Activated T-helper 2 cell treated with anti-CD3 and anti-CD28 coated beads, Interferon-gamma antibody, Interleukin-2, Interleukin-4, amounts not matched to agents 10 μg/mL and 5 μg/mL and 100 μg/mL, durations not matched to agents 14 hours and 24 hours and 36 hours (primary cell): ENCODE measurements at regions of chr10 and their contacts with region 1.

Region 1: DNA sequence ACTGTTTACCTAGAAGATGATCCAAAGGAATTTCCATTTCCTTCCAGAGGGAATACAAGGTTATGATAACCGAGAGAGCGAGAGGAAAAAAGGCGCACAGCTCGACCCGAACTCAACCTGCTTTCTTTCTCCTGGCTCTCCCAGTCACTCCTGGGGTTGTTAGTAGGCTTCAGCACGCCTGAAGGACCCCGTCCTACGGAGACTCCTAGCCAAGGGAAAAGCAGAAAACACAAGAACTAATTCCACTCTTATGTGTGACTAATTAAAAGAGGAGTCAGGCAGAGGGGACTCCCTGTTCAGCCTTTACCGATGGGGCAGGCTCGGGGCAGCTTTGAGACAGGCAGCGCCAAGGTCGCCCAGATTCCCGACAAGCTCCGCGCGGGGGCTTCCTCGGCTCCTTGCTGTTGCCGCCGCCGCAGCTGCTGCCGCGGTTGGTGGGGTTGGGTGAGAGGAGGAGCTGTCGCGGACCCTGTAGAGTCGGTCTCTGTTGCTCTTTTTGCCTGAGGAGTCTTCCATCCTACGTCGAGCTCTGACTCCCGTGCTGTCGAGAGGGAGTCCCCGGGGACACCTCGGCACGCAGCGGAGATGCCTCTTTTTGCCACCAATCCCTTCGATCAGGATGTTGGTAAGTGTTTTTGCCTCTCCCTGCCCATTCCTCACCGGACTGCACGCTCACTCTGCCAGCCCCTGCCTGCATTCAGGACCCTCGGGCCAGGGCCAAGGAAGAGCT is at the start of gene STAM:
- DNase-seq: peak; percentile 87
- H3K4me3 Mint-ChIP-seq: peak within 1 kb of the TSS; percentile 98
- H3K27ac Mint-ChIP-seq: peak within 1 kb of the TSS; percentile 99
- H3K4me1 Mint-ChIP-seq: peaks cover 44% of the 10 kb centered on the region
- H3K27me3 Mint-ChIP-seq: no peaks in the 10 kb centered on the region
- total RNA-seq, gene STAM: 33.8 and 35.2 TPM in 2 replicates

Region 2: GRCh38 chr10:16817125-16818019 is 826.5 kb before region 1 on chr10 and contains the start of gene RSU1:
- intact Hi-C with region 1: loop called (anchors 1 kb)
- DNase-seq: peak; percentile 100
- H3K4me3 Mint-ChIP-seq: peak within 1 kb of the TSS; percentile 93
- H3K27ac Mint-ChIP-seq: peak within 1 kb of the TSS; percentile 79
- H3K4me1 Mint-ChIP-seq: peaks cover 27% of the 10 kb centered on the region
- H3K27me3 Mint-ChIP-seq: peaks cover 10% of the 10 kb centered on the region
- total RNA-seq, gene RSU1: 49.1 and 54.0 TPM in 2 replicates

Region 3: DNA sequence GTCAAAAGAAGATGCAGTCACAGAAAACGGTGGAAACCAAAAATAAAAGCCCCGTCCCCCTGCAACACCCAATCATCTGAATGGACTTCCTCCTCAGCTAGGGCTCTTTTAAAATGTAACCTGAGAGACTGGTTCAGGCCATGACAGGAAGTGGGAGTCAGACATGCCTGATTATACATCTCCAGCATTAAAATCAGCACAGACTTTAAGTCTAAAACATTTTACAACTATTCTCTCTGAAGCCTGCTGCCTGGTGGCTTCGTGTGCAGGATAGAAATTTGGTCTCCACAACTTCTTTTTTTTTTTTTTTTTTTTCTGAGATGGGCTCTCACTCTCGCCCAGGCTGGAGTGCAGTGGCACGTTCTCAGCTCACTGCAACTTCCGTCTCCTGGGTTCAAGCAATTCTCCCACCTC is 57.1 kb before region 1 on chr10:
- intact Hi-C with region 1: no loop called
- DNase-seq: no peak
- H3K4me3 Mint-ChIP-seq: no peak overlapping the region
- H3K27ac Mint-ChIP-seq: no peak overlapping the region
- H3K4me1 Mint-ChIP-seq: peaks cover 3% of the 10 kb centered on the region
- H3K27me3 Mint-ChIP-seq: peaks cover 9% of the 10 kb centered on the region

Region 4: DNA sequence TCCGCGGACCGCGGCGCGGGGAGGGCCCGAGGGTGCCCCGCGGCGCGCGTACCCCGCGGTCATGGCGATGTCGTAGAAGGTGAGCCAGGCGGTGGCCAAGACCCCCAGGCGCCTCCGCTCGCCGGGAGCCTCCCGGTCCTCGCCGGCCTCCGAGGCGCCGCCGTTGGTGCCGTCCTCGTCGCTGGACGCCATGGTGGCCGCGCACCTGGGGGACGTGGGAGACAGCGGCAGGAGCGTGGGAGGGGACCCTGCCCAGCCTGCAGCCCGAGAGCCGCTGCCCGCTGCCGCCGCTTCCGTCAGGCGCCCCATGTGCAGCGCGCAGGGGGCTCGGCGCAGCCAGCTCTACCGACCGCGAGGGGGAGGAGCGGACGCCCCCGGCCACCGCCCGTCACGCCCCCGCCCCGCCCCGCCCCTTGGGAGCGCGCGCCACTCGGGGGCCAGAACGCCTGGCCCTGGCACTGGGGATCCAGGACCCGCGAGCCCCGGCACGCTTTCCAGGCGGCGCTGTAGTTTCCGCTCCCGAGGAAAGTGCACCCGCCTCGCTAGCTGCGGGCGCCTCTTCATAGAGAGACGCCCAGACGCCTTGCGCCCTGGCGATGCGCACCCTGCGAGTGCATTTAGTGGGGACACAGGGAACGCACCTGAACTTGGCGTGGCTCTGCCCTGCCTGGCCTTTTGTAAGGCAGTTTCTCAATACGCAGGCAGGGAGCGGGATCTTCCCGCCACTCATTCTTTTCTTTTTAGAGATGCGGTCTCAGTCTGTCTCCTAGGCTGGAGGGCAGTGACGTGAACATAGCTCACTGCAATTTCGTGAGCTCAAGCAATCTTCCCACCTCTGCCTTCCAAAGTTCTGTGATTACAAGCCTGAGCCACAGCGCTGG is 26.6 kb before region 1 on chr10 and contains the start of gene HACD1:
- intact Hi-C with region 1: loop called (anchors 1 kb)
- DNase-seq: peak; percentile 34
- H3K4me3 Mint-ChIP-seq: peak within 1 kb of the TSS; percentile 82
- H3K27ac Mint-ChIP-seq: peak within 1 kb of the TSS; percentile 77
- H3K4me1 Mint-ChIP-seq: peaks cover 4% of the 10 kb centered on the region
- H3K27me3 Mint-ChIP-seq: peaks cover 29% of the 10 kb centered on the region
- total RNA-seq, gene HACD1: 6.0 and 6.6 TPM in 2 replicates

Region 5: DNA sequence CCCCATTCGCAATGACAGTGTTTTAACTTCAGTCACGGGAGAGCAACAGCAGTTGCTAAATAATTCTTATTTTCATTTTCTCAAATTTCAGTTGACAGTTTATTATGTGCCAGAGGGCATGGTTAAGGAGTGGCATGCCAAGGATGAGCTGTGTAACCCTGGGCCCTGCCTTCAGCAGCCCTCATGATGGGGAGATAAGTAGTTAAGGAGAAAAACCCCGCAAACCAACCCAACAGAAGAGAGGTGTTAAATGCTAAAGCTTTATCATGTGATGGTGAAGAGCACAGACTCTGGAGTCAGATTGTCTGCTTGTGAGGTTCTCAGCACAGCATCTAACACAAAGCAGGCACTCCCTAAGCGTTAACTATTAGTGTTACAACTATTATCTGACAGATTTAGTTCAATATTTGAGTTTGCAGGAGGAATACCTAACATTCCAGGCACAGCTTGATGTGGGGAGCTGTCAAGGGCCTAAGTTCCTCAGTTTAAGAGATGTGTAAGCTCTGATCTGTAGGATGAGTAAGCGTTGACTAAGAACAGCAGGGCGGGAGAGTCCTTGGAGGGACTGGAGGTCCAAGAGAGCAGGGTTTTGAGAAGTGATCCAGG is 29.6 kb after region 1 on chr10:
- intact Hi-C with region 1: loop called (anchors 1 kb)
- DNase-seq: no peak
- H3K4me3 Mint-ChIP-seq: no peak overlapping the region
- H3K27ac Mint-ChIP-seq: peak overlapping the region; percentile 79
- H3K4me1 Mint-ChIP-seq: peaks cover 56% of the 10 kb centered on the region
- H3K27me3 Mint-ChIP-seq: no peaks in the 10 kb centered on the region

Region 6: DNA sequence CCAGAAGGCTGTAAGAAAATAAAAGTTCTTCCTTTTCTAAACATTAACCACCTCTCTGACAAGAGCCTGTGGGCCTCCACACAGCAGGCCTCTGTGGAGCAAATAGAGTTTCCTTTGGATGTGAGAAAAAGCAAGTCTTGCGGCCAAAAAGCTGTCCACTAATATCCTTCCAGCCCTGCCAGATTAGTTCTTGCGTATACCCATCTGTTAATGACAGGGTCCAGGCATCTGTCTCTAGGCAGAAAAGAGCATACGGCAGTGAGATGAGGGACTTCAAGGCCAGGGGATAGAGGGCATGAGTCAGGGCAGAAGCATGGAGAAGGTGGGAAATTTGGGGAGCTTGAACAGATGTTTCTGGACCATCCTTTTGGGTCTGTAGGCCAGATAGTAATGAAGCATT is 842.5 kb after region 1 on chr10:
- intact Hi-C with region 1: no loop called
- DNase-seq: no peak
- H3K4me3 Mint-ChIP-seq: no peak overlapping the region
- H3K27ac Mint-ChIP-seq: no peak overlapping the region
- H3K4me1 Mint-ChIP-seq: no peaks in the 10 kb centered on the region
- H3K27me3 Mint-ChIP-seq: no peaks in the 10 kb centered on the region

Region 7: DNA sequence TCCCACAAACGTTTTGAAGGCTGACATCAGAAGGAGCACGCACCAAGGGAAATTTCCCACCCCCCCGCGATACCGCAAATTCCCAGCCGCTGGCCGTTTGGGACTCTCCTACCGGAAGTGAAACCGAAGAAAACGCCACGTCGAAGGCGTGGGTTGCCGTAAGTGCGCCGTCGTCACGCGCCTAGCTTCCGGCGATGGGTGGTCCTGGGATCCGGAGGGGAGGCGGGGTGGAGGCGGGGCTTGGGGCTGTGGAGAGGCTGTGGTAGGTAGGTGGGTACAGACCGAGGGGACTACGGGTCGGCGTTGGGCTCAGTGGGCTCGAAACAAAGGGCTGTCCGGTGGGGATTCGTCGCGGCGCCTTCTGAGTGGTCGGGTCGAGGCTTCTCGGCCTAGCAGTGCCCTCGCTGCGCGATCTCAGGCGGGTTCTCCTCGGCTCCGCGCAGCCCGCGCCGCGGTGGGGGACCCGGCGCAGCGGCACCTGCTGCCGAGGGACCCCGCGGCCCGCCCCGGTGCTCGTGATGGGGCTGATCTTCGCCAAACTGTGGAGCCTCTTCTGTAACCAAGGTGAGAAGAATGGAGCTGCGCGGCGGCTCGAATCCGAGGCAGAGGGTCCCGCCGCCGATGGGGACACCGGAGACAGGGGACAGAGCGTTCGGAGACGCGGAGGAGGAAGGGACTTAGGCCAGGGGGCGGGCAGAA is 1015.3 kb after region 1 on chr10 and contains the start of gene ARL5B:
- intact Hi-C with region 1: loop called (anchors 10 kb)
- DNase-seq: peak; percentile 92
- H3K4me3 Mint-ChIP-seq: peak within 1 kb of the TSS; percentile 94
- H3K27ac Mint-ChIP-seq: peak within 1 kb of the TSS; percentile 91
- H3K4me1 Mint-ChIP-seq: peaks cover 37% of the 10 kb centered on the region
- H3K27me3 Mint-ChIP-seq: no peaks in the 10 kb centered on the region
- total RNA-seq, gene ARL5B: 26.1 and 26.4 TPM in 2 replicates